T-cell (primary cell): ENCODE measurements at regions of chr10 and their contacts with region 1.

Region 1: GRCh38 chr10:80202934-80203834 is 2.2 kb downstream of the ANXA11 start:
- DNase-seq: peak; percentile 23 to 78 (median 56)
- ATAC-seq: peak; percentile 54 to 62 (median 59)
- H3K4me3 ChIP-seq: peak overlapping the region; percentile 72 to 94
- H3K4me3 Mint-ChIP-seq: peak overlapping the region; percentile 83 to 98 (median 97)
- H3K27ac ChIP-seq: peak overlapping the region; percentile 26
- H3K27ac Mint-ChIP-seq: peak overlapping the region; percentile 87 to 92
- H3K4me1 ChIP-seq: peaks cover 41 to 69% of the 10 kb centered on the region in 2 experiments
- H3K4me1 Mint-ChIP-seq: peaks cover 65 to 70% (median 70%) of the 10 kb centered on the region in 3 donors
- H3K27me3 ChIP-seq: no peaks in the 10 kb centered on the region
- H3K27me3 Mint-ChIP-seq: no peaks in the 10 kb centered on the region

Region 2: DNA sequence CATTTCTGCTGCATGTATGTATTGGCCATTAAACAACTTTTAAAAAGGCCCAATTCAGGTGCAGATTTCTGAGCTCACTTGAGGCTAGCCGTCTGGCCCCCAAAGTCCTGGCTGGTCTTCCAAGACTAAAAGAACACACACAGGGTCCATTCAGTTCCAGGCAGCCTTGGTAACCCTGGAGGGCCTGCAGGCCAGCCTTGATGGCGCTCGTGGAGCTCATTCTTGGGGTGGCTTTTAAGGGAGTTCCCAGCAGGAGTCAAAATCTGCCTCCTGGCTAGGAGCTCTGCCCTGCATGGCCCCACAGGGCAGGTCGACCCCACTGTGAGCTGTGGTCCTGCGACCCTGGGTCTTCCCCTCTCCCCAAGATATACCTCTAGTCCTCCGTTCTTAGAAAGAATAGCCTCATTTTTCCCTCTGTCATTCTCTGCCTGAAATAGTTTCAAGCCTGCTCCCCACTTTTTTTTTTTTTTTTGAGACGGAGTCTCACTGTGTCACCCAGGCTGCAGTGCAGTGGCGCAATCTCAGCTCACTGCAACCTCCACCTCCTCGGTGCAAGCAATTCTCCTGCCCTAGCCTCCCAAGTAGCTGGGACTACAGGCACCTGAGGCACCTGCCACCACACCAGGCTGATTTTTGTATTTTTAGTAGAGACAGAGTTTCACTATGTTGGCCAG is 26.5 kb before region 1 on chr10:
- CTCF ChIA-PET with region 1: interaction called in 1 of 2 experiments, 4 read pairs
- POLR2A ChIA-PET with region 1: interaction called in 1 of 2 experiments, 10 read pairs
- DNase-seq: no peak
- ATAC-seq: no peak
- H3K4me3 ChIP-seq: no peak overlapping the region
- H3K4me3 Mint-ChIP-seq: peak overlapping the region in 1 of 3 donors; percentile 22
- H3K27ac ChIP-seq: no peak overlapping the region
- H3K27ac Mint-ChIP-seq: peak overlapping the region in 1 of 2 donors; percentile 71
- H3K4me1 ChIP-seq: peaks cover 0 to 65% of the 10 kb centered on the region in 2 experiments
- H3K4me1 Mint-ChIP-seq: peaks cover 58 to 65% (median 64%) of the 10 kb centered on the region in 3 donors
- H3K27me3 ChIP-seq: no peaks in the 10 kb centered on the region
- H3K27me3 Mint-ChIP-seq: no peaks in the 10 kb centered on the region

Region 3: GRCh38 chr10:80187465-80188409 is 15.4 kb before region 1 on chr10:
- CTCF ChIA-PET with region 1: interaction called, 6 to 44 read pairs
- POLR2A ChIA-PET with region 1: interaction called, 7 to 13 read pairs
- DNase-seq: peak; percentile 73 to 96 (median 87)
- ATAC-seq: peak; percentile 94 to 96 (median 96)
- H3K4me3 ChIP-seq: peak overlapping the region; percentile 19 to 33
- H3K4me3 Mint-ChIP-seq: peak overlapping the region; percentile 67 to 75 (median 68)
- H3K27ac ChIP-seq: peak overlapping the region; percentile 86
- H3K27ac Mint-ChIP-seq: peak overlapping the region; percentile 94 to 95
- H3K4me1 ChIP-seq: peaks cover 42 to 85% of the 10 kb centered on the region in 2 experiments
- H3K4me1 Mint-ChIP-seq: peaks cover 87 to 92% (median 88%) of the 10 kb centered on the region in 3 donors
- H3K27me3 ChIP-seq: no peaks in the 10 kb centered on the region
- H3K27me3 Mint-ChIP-seq: no peaks in the 10 kb centered on the region

Region 4: GRCh38 chr10:80365510-80365909 is 162.3 kb after region 1 on chr10:
- CTCF ChIA-PET with region 1: no interaction called
- POLR2A ChIA-PET with region 1: no interaction called
- DNase-seq: no peak
- ATAC-seq: no peak
- H3K4me3 ChIP-seq: no peak overlapping the region
- H3K4me3 Mint-ChIP-seq: no peak overlapping the region
- H3K27ac ChIP-seq: no peak overlapping the region
- H3K27ac Mint-ChIP-seq: no peak overlapping the region
- H3K4me1 ChIP-seq: no peaks in the 10 kb centered on the region
- H3K4me1 Mint-ChIP-seq: no peaks in the 10 kb centered on the region
- H3K27me3 ChIP-seq: peaks cover 0 to 2% of the 10 kb centered on the region in 2 experiments
- H3K27me3 Mint-ChIP-seq: peaks cover 7 to 10% of the 10 kb centered on the region in 2 donors